ENCODE measurements at regions of chr6 and their contacts with region 1.

Region 1: GRCh38 chr6:157813757-157814455 is 9.1 kb upstream of the SNX9 start:
- DNase-seq: no peak
- ATAC-seq: peak; percentile 74 to 86 (median 80)
- H3K4me3 ChIP-seq: no peak overlapping the region
- H3K27ac ChIP-seq: peak overlapping the region in 2 of 4 donors; percentile 33 to 62
- H3K4me1 ChIP-seq: peaks cover 0 to 16% (median 0%) of the 10 kb centered on the region in 3 donors
- H3K27me3 ChIP-seq: no peaks in the 10 kb centered on the region
- CTCF ChIP-seq: no peak

Region 2: DNA sequence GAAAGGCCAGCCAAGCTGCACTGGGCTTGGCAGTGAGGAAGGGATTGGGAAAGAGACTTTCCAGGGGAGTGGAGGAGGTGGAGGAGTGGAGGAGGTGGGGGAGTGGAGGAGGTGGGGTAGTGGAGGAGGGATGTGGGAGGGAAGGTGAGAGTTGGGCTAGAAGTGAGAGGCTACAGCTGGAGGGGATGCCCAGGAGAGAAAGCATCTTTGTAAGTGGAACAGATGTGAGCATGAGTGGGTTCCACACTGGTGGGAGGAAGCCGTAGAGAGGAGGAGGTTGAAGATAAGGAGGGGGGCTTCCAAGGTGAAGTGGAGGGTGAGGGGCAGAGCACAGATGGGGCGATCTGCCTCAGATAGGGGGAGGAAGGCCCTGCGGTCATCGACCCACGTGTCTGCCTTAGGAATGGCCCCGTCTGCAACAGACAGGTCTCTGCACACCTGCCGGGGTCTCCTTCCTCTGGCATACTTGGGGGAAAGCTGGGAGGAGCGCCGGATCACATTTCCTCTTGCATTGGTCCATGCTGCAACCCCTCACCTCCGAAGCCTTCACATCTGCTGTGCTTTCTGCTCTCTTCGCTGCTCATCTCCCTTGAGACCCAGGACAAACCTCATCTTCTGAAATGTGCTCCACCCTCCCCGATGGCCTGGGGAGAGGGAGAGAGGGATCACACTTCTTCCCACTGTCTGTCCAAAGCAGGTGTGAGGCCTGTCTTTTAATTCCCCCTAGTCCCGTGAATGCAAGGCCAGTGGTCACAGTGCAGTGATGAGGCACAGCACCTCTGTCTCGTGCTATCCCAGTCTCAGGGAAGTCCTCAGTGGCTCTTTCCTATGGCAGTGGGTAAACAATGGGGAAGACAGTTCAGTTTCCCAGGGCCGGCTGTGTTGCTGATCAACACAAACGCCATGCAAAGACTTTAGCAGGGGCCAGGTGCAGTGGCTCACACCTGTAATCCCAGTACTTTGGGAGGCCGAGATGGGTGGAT is 39.5 kb before region 1 on chr6:
- intact Hi-C with region 1: loop called in 1 of 3 experiments (anchors 5 kb)
- DNase-seq: no peak
- ATAC-seq: peak in 3 of 4 donors; percentile 33 to 66 (median 65)
- H3K4me3 ChIP-seq: no peak overlapping the region
- H3K27ac ChIP-seq: no peak overlapping the region
- H3K4me1 ChIP-seq: no peaks in the 10 kb centered on the region
- H3K27me3 ChIP-seq: no peaks in the 10 kb centered on the region
- CTCF ChIP-seq: no peak

Region 3: DNA sequence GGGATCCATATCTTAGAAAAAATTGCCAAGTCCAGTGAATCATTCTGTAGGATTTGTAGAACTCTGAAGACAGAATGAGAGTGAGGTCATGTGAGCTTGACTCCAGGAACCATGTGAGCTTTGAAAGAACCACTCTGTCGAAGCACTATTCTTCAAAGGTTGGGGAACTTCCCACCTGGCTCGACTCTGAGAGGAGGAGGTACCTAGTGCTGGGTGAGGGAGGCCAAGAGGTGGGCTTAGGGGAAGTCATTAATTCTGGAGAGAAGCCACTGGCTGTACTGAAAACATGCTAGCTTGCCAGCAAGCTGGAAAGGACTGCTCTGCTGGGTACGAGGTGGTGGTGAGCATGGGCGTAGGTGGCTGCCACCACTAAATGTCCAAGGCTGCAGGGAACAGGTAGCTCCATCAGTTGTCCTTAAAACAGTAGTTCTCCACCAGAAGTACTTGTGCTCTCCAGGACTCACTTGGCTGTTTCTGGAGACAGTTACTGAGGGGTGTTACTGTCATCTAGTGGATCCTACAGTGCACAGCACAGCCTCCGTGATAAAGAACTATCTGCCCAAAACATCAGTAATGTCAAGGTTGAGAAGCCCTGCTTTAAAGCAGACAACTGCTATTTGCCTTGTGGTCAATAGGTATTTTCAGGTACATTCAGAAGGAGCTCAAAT is 133.1 kb after region 1 on chr6:
- intact Hi-C with region 1: no loop called
- DNase-seq: no peak
- ATAC-seq: peak in 3 of 4 donors; percentile 42 to 64 (median 51)
- H3K4me3 ChIP-seq: no peak overlapping the region
- H3K27ac ChIP-seq: no peak overlapping the region
- H3K4me1 ChIP-seq: no peaks in the 10 kb centered on the region
- H3K27me3 ChIP-seq: no peaks in the 10 kb centered on the region
- CTCF ChIP-seq: no peak